Pancreas (tissue), 10 donors: ENCODE measurements at regions of chr2 and their contacts with region 1.

Region 1: DNA sequence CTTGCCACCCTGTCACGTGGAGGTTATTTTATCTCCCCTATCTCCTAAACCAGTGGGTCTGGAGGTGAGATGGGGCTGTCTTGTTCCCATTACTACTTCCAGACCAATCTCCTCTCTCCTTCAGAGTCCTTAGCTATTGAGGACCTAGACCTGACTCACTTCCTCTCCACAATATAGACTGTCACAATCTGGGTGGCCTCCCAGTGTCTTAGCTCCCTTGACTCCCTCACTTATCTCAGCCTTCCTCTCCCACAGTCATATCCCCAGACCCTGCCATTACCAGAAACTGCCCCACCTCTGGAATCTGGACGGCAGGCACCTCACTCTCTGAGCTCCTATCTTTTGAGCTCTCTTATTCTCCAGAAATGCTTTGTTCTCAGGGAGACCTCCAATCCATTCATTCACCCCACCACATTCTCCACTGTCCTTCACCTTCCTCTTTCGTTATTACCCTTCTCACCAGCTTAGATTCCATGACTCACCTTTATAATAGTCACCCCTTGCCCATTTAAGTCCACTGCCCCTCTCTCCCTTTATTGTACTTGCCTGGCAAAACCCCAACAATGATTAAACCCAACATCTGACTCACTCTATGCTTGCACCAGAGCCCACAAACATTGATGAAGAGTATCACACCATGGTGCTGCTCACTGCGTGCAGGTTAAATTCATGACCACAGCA is 23.3 kb upstream of the SIX3 start:
- DNase-seq: no peak
- ATAC-seq: no peak
- H3K4me3 ChIP-seq: no peak overlapping the region
- H3K27ac ChIP-seq: no peak overlapping the region
- H3K4me1 ChIP-seq: no peaks in the 10 kb centered on the region
- H3K27me3 ChIP-seq: no peaks in the 10 kb centered on the region
- CTCF ChIP-seq: no peak

Region 2: DNA sequence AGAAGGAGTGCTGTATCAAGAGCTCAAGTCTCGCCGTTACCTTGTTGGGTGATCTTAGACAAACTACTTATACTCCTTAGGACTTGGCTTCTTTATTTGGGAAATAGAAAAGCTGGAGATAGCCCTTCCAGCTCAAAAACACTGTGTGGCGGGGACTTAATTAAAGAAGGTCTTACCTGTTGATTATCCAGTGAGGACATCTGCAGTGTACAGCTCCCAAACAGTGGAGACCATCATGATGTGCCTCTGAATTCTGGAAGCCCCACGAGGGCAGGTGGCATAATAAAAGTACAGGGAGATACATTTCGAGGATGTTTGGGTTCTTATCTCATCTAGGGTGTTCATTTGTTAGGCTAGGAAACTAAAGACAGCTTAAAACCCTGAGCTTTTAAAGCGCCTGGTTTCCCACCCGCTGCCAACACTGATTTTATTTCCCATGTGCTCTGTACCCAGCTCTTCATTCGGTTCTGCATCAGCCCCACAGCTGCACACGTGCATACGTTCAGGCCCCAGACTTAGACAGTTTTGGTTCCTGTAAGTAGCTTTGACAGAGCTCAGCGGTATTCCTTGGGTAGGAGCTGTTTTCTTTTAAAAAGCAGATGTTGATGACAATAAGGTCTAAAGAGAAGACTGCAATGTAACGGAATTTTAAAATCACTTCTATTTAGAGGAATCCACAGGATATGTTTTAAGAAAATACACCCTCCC is 171.5 kb after region 1 on chr2:
- intact Hi-C with region 1: loop called in 1 of 3 experiments (anchors 5 kb)
- DNase-seq: no peak
- ATAC-seq: no peak
- H3K4me3 ChIP-seq: no peak overlapping the region
- H3K27ac ChIP-seq: no peak overlapping the region
- H3K4me1 ChIP-seq: no peaks in the 10 kb centered on the region
- H3K27me3 ChIP-seq: no peaks in the 10 kb centered on the region
- CTCF ChIP-seq: no peak